ENCODE measurements at regions of chr13 and their contacts with region 1.

Region 1: GRCh38 chr13:70568571-70568970 is 460.3 kb upstream of the KLHL1 start:
- DNase-seq: peak; percentile 70
- ATAC-seq: no peak
- H3K4me3 ChIP-seq: no peak overlapping the region
- H3K27ac ChIP-seq: no peak overlapping the region
- H3K4me1 ChIP-seq: no peaks in the 10 kb centered on the region
- H3K27me3 ChIP-seq: no peaks in the 10 kb centered on the region
- CTCF ChIP-seq: peak; percentile 72

Region 2: GRCh38 chr13:69857183-69857821 is 711.3 kb before region 1 on chr13:
- CTCF ChIA-PET with region 1: no interaction called
- POLR2A ChIA-PET with region 1: no interaction called
- intact Hi-C with region 1: loop called (anchors 5 kb)
- DNase-seq: peak; percentile 66
- ATAC-seq: peak; percentile 65
- H3K4me3 ChIP-seq: no peak overlapping the region
- H3K27ac ChIP-seq: no peak overlapping the region
- H3K4me1 ChIP-seq: no peaks in the 10 kb centered on the region
- H3K27me3 ChIP-seq: no peaks in the 10 kb centered on the region
- CTCF ChIP-seq: peak; percentile 67

Region 3: DNA sequence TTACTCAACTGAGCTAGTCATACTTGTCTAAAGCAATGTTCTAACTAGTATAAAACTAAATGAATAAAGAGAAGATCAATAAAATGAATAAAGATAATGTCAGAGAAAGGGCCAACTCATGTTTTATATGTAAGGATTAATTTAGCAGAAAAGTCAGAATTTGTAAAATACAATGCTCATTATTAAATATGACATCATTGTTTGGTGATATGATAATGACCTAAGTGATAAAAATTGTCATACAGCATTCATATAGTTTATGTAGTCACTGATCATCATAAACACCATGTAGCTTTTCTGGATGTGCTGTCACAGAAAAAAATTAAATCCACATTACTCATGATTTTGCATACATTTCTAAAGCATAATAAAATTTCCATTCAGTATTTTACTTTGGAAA is 464.1 kb before region 1 on chr13:
- CTCF ChIA-PET with region 1: no interaction called
- POLR2A ChIA-PET with region 1: no interaction called
- intact Hi-C with region 1: loop called (anchors 5 kb)
- DNase-seq: no peak
- ATAC-seq: no peak
- H3K4me3 ChIP-seq: no peak overlapping the region
- H3K27ac ChIP-seq: no peak overlapping the region
- H3K4me1 ChIP-seq: no peaks in the 10 kb centered on the region
- H3K27me3 ChIP-seq: no peaks in the 10 kb centered on the region
- CTCF ChIP-seq: no peak

Region 4: GRCh38 chr13:70339738-70340137 is 228.8 kb before region 1 on chr13:
- CTCF ChIA-PET with region 1: no interaction called
- POLR2A ChIA-PET with region 1: no interaction called
- intact Hi-C with region 1: loop called (anchors 1 kb)
- DNase-seq: peak; percentile 57
- ATAC-seq: peak; percentile 73
- H3K4me3 ChIP-seq: no peak overlapping the region
- H3K27ac ChIP-seq: no peak overlapping the region
- H3K4me1 ChIP-seq: no peaks in the 10 kb centered on the region
- H3K27me3 ChIP-seq: no peaks in the 10 kb centered on the region
- CTCF ChIP-seq: peak; percentile 67

Region 5: GRCh38 chr13:70353096-70353495 is 215.5 kb before region 1 on chr13:
- CTCF ChIA-PET with region 1: no interaction called
- POLR2A ChIA-PET with region 1: no interaction called
- intact Hi-C with region 1: loop called (anchors 1 kb)
- DNase-seq: peak; percentile 15
- ATAC-seq: peak; percentile 79
- H3K4me3 ChIP-seq: no peak overlapping the region
- H3K27ac ChIP-seq: no peak overlapping the region
- H3K4me1 ChIP-seq: no peaks in the 10 kb centered on the region
- H3K27me3 ChIP-seq: no peaks in the 10 kb centered on the region
- CTCF ChIP-seq: no peak; the same call in 1 of the 2 replicates

Region 6: GRCh38 chr13:70884196-70884595 is 315.6 kb after region 1 on chr13:
- CTCF ChIA-PET with region 1: no interaction called
- POLR2A ChIA-PET with region 1: no interaction called
- intact Hi-C with region 1: no loop called
- DNase-seq: no peak
- ATAC-seq: no peak
- H3K4me3 ChIP-seq: no peak overlapping the region
- H3K27ac ChIP-seq: no peak overlapping the region
- H3K4me1 ChIP-seq: no peaks in the 10 kb centered on the region
- H3K27me3 ChIP-seq: no peaks in the 10 kb centered on the region
- CTCF ChIP-seq: no peak